BJ (cell line): ENCODE measurements at regions of chr12 and their contacts with region 1.

Region 1: DNA sequence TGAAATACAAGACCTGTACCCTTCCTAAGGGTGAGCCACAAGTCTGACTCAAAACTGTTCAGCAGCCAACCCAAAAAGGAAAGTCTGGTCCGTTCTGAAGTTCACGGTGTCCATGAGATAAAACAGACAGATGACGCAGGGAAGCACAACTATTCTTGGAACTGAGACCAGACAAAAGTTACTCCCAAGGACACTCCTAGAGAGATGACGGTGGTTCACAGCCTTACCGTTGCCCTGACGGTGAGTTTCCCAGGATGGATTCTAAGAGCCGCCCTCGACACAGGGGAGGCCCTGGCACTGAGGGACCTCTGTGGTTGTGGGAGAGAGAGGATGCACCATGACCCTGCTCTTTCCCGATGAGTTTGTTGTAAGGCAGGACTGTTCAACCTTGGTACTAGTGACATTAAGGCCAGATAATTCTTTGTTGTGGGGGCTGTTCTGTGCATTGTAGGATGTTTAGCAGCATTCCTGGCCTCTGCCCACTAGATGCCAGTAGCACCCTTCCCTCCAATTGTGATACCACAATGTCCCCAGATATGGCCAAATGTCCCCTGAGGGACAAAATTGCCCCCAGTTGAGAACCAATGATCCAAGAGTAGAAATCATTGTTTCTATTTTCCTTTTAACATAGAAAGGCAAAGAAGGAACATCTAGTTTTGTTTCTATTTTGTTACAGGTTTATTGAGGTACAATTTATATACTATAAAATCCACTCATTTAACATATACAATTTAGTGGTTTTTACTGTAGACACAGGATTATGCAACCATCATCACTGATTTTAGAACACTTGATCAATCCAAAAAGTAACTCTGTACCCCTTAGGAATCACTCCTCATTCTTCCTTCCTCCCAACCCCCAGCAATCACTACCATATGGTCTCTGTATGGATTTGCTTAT is 23.0 kb downstream of the OR10P1 start:
- DNase-seq: no peak
- H3K4me3 ChIP-seq: no peak overlapping the region
- H3K27me3 ChIP-seq: peaks cover 9% of the 10 kb centered on the region
- CTCF ChIP-seq: peak; percentile 46; the same call in 1 of the 2 replicates

Region 2: DNA sequence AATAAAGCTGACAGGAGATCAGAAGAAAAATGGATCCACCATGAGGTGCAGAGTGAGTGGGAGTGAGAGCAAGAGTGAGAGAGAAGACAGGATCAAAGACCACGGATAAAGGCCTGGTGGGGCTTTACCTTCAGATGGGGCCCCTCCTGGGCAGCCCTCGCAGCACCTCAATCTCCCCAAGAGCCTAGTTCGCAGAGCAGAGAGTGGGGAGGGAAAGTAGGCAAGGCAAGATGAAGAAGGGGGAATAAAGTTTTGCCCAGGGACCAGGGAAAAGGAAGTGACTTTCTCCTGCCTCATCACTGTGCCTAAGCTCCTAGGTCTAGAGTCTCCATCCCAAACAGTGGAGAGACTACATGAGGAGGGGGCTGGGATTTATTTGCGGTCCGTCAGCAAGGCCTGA is 12.7 kb before region 1 on chr12:
- CTCF ChIA-PET with region 1: interaction called, 24 read pairs
- POLR2A ChIA-PET with region 1: no interaction called
- DNase-seq: no peak
- H3K4me3 ChIP-seq: no peak overlapping the region
- H3K27me3 ChIP-seq: no peaks in the 10 kb centered on the region; the same call in 1 of the 2 replicates
- CTCF ChIP-seq: no peak

Region 3: DNA sequence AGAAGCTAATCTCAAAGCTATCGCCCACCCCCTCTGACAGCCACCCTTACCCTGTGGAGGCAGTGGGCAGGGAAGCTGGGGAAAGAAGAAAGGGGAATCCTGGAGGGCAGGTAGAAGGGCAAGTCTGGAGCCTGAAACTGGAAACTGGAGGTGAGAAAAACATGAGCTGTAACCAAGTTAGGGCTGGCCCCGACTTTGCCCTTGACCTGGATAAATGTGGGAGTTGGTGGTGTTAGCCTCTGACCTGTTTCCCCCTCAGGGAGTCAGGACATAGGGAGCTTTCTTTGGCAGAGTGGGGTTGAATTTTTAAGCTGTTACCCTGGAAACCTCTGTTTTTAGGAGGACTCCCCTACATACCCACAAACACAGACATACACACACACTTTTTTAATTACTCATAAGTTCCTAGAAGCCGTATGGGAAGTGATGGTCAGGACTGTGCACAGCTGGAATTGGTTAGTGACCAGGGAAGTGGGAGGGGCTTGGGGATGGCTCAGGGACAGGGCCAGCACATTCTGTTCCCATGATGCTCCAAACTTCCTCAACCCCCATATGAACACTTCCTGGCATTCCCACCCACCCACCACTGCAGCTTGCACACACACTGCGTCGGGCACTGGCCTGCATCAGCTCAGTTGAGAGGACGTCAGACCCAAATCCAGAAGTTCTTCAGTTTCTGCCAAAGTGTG is 188.0 kb after region 1 on chr12:
- CTCF ChIA-PET with region 1: no interaction called
- POLR2A ChIA-PET with region 1: no interaction called
- DNase-seq: peak; percentile 99
- H3K4me3 ChIP-seq: peak overlapping the region; percentile 15; the same call in 1 of the 2 replicates
- H3K27me3 ChIP-seq: no peaks in the 10 kb centered on the region
- CTCF ChIP-seq: no peak